OCI-LY7 (cell line): ENCODE measurements at regions of chr20 and their contacts with region 1.

Region 1: GRCh38 chr20:53623454-53624211 is 30.0 kb upstream of the ZNF217 start:
- DNase-seq: peak; percentile 59
- H3K4me3 ChIP-seq: peak overlapping the region; percentile 49
- H3K27ac ChIP-seq: peak overlapping the region; percentile 90
- H3K4me1 ChIP-seq: peaks cover 79% of the 10 kb centered on the region
- CTCF ChIP-seq: no peak

Region 2: DNA sequence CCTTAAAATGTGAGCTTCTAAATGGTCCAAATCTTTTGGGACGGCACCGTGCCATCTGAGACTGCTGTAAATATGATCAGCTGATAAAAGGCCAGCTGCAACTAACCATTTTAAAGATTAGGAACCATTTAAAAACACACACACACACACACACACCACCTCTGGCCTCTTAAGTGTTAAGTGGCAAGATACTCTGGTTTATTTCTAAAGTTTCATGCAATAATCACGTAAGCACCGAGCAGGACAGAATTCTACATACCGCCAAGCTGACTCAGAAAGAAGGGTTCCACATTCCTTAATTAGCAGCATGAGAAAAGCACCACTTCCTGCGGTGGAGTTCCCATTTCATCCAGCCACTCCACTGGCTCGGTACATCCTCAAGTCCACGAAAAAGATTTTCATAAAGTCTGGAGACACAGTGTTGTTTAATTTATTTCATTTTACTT is 12.2 kb before region 1 on chr20:
- CTCF ChIA-PET with region 1: interaction called, 7 read pairs
- POLR2A ChIA-PET with region 1: interaction called, 50 read pairs
- intact Hi-C with region 1: no loop called
- DNase-seq: peak; percentile 34
- H3K4me3 ChIP-seq: peak overlapping the region; percentile 43
- H3K27ac ChIP-seq: peak overlapping the region; percentile 83
- H3K4me1 ChIP-seq: peaks cover 51% of the 10 kb centered on the region
- CTCF ChIP-seq: no peak

Region 3: DNA sequence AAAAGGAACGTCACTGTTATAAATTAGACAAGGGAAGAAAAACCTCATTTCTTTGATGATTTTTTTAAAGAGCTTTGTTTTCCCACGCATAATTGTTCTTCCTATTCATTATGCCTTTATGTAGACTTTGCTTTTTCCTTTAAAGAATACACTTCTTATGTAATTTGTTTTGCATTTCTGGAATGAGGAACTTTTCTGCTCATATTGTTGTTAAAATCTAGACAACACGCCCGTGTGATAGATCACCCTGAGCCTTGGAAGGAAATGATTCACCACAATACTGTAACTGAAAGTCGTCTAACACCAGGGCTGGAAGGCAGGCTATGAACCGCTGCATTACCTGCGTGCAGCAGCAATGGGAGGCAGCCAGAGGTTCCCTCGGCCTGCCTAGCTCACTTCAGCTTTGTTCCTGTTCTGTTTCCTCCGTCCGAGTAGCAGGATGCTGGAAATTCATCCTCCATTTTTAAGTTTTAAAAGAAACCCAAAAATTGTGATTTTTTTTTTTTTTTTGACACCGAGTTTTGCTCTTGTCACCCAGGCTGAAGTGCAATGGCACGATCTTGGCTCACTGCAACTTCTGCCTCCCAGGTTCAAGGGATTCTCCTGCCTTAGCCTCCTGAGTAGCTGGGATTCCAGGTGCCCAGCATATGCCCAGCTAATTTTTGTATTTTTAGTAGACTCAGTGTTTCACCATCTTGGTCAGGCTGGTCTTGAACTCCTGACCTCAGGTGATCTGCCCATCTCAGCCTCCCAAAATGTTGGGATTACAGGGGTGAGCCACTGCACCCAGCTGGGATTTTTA is 19.6 kb after region 1 on chr20:
- CTCF ChIA-PET with region 1: interaction called, 3 read pairs
- POLR2A ChIA-PET with region 1: interaction called, 22 read pairs
- intact Hi-C with region 1: no loop called
- DNase-seq: peak; percentile 80
- H3K4me3 ChIP-seq: peak overlapping the region; percentile 34
- H3K27ac ChIP-seq: peak overlapping the region; percentile 73
- H3K4me1 ChIP-seq: peaks cover 24% of the 10 kb centered on the region
- CTCF ChIP-seq: no peak

Region 4: DNA sequence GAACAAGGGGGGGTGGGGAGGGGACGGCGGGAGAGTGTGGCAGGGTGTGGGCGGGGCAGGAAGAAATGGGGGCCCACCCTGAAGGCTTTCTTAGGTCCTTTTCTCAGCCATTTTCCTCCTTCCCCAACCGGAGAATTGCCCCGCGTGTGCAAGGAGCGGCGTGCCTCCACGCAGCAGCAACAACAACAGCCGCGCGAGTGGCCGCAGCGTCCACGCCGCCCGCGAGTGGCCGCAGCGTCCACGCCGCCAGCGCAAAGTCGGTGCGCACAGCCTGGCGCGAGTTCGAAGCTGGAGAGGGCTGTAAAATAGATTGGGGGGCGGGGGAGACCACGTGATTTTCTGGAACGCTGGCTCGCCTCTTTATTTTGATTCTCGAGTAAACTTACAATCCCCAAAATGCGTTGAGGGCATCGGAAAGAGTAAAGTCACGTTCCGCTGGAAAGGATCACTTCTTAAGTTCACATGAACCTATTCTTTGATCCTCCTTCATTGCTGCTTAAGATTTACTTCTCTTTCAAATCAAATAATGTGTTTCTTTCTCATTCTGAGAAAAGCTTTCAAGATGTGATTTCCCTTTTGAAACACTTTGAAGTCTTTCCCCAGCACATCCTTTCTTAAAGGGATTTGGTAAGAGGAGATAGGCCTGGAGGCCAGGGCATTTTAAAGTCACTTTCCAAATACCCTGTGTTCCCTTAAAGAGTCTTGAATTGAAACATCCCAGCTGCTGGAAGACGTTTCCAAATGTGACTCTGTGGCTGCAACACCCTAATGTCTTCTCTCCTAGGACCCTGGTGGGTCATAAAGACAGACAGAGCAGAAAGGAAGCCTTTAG is 36.7 kb after region 1 on chr20:
- CTCF ChIA-PET with region 1: no interaction called
- POLR2A ChIA-PET with region 1: interaction called, 14 read pairs
- intact Hi-C with region 1: no loop called
- DNase-seq: peak; percentile 41
- H3K4me3 ChIP-seq: peak overlapping the region; percentile 57
- H3K27ac ChIP-seq: peak overlapping the region; percentile 67
- H3K4me1 ChIP-seq: peaks cover 70% of the 10 kb centered on the region
- CTCF ChIP-seq: no peak

Region 5: DNA sequence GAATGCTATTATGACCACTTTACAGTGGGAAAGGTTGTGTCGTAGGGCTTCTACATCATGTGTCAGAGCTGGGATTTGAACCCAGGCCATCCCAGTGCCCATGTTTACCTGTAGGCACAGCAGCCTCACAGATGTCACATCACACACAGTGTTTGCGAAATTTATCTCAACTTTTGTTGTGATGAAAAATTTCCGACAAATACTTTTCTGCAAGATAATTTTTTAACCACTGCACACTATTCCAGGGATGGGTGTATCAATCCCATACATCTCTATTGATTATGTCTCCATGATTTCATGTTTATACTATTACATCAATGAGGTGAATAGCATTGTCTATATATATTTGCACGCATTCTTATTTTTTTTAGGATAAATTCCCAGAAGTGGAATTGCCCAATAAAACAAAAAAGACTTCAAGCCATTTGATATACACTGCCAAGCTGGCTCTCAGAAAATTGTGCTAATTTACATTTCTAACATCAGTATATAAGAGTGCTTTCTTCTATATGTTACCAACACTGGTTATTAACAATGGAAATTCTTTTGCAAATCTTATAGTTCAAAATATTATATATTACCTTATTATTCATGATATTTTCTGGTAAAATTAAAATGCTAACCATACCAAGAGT is 159.1 kb after region 1 on chr20:
- CTCF ChIA-PET with region 1: no interaction called
- POLR2A ChIA-PET with region 1: no interaction called
- intact Hi-C with region 1: no loop called
- DNase-seq: no peak
- H3K4me3 ChIP-seq: no peak overlapping the region
- H3K27ac ChIP-seq: no peak overlapping the region
- H3K4me1 ChIP-seq: peaks cover 12% of the 10 kb centered on the region
- CTCF ChIP-seq: no peak